WTC11 (cell line): ENCODE measurements at regions of chr15 and their contacts with region 1.

Region 1: DNA sequence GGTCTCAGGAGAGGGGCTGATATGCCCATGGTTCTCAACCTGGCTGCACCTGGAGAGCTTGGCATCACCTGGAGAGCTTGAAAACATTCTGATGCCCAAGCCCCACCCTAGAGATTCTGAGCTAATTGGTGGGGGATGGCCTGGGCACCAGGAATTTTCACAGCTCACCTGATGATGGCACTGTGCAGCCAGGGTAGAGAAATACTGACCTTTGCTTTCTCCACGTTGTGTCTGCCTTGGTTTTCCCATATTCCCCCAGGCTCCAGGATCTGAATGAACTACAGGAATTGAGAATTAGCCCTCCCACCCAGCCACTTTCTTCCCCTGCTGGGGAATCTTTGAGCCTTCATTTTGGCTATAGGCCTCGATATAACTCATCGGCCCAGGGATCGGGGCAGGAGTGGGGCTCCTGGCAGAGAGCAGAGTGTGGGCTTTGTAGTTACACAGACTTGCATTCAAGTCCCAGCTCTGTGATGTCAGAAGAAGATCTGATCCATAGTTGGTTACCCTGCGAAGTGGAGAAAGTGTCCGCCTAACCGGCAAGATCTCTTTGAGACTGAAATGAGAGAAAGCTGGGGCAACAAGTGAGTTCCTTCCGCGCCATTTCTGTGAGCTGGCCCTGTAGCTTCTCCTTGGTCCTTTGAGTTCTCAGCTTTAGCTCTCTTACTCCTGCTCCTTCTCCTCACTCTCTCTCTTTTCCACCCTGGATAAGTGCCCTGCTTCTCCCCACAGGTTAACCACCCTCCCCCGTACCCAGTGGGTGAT is 33.1 kb upstream of the UBE2Q2 start:
- DNase-seq: peak; percentile 60
- ATAC-seq: peak; percentile 96
- H3K4me3 Mint-ChIP-seq: no peak overlapping the region
- H3K27ac Mint-ChIP-seq: no peak overlapping the region
- H3K4me1 Mint-ChIP-seq: peaks cover 7% of the 10 kb centered on the region
- H3K27me3 Mint-ChIP-seq: peaks cover 17% of the 10 kb centered on the region
- CTCF ChIP-seq: no peak

Region 2: GRCh38 chr15:75684642-75685041 is 125.5 kb before region 1 on chr15:
- CTCF ChIA-PET with region 1: interaction called, 11 read pairs
- POLR2A ChIA-PET with region 1: no interaction called
- DNase-seq: no peak
- ATAC-seq: no peak
- H3K4me3 Mint-ChIP-seq: no peak overlapping the region
- H3K27ac Mint-ChIP-seq: no peak overlapping the region
- H3K4me1 Mint-ChIP-seq: peaks cover 22% of the 10 kb centered on the region
- H3K27me3 Mint-ChIP-seq: 0 out of 2 replicates have a peak, but pooled peaks cover 2% of the 10 kb centered on the region
- CTCF ChIP-seq: no peak

Region 3: GRCh38 chr15:75785771-75786574 is 24.2 kb before region 1 on chr15:
- CTCF ChIA-PET with region 1: interaction called, 11 read pairs
- POLR2A ChIA-PET with region 1: no interaction called
- DNase-seq: peak; percentile 74
- ATAC-seq: peak; percentile 66
- H3K4me3 Mint-ChIP-seq: peak overlapping the region; percentile 64
- H3K27ac Mint-ChIP-seq: no peak overlapping the region
- H3K4me1 Mint-ChIP-seq: peaks cover 7% of the 10 kb centered on the region
- H3K27me3 Mint-ChIP-seq: peaks cover 34% of the 10 kb centered on the region
- CTCF ChIP-seq: no peak

Region 4: DNA sequence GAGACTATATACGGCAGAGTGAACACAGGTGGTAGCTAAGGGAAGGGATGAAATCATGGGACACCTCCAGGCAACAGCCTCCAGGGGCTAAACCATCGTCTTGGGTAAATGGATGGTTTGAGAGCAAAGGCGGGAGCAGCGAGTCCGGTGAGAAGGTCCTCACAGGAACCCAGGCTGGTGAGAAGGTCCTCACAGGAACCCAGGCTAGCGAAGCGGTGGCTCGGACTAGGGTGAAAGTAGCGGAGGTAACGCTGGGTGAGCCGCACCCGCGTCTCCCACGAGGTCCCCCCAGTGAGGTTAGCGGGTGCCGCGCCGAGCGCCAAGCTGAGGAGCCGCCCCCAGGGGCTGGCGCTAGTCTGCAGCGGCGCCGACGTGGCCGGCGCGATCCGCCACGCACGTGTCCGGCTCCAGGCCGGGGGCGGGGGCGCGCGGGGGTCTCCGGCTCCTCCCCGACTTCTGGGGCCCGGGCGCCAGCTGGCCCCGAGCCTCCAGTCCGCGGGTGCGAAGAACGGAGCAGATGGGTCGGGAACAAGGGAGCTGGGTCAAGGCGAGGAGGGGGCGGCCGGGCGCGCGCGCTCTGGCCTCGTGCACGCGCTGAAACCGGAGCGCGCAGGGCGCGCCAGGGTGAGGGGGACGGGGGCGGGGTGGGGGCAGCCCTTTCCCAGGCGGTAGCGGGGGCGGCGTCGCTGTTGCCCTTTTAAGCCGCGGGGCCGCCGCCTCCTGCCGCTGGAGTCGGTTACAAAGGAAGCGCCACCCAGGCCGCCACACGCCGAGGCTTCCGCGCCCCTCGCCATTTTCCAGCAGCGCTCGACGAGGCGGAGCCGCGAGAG is 32.8 kb after region 1 on chr15 and contains the start of gene UBE2Q2:
- CTCF ChIA-PET with region 1: interaction called, 30 read pairs
- POLR2A ChIA-PET with region 1: no interaction called
- DNase-seq: peak; percentile 84
- ATAC-seq: peak; percentile 63
- H3K4me3 Mint-ChIP-seq: peak within 1 kb of the TSS; percentile 97
- H3K27ac Mint-ChIP-seq: peak within 1 kb of the TSS; percentile 94
- H3K4me1 Mint-ChIP-seq: peaks cover 41% of the 10 kb centered on the region
- H3K27me3 Mint-ChIP-seq: peaks cover 20% of the 10 kb centered on the region
- CTCF ChIP-seq: no peak
- total RNA-seq, gene UBE2Q2: 26.1 to 28.2 TPM (median 27.0 TPM) in 3 replicates

Region 5: GRCh38 chr15:75921729-75922703 is 111.8 kb after region 1 on chr15:
- CTCF ChIA-PET with region 1: interaction called, 52 read pairs
- POLR2A ChIA-PET with region 1: no interaction called
- DNase-seq: peak; percentile 28
- ATAC-seq: peak; percentile 88
- H3K4me3 Mint-ChIP-seq: no peak overlapping the region
- H3K27ac Mint-ChIP-seq: peak overlapping the region; percentile 8; the same call in 1 of the 2 replicates
- H3K4me1 Mint-ChIP-seq: peaks cover 27% of the 10 kb centered on the region
- H3K27me3 Mint-ChIP-seq: no peaks in the 10 kb centered on the region
- CTCF ChIP-seq: peak; percentile 23; the same call in 1 of the 2 replicates

Region 6: GRCh38 chr15:76150971-76151598 is 340.9 kb after region 1 on chr15:
- CTCF ChIA-PET with region 1: interaction called, 12 read pairs
- POLR2A ChIA-PET with region 1: no interaction called
- DNase-seq: peak; percentile 90
- ATAC-seq: peak; percentile 83
- H3K4me3 Mint-ChIP-seq: peak overlapping the region; percentile 24
- H3K27ac Mint-ChIP-seq: peak overlapping the region; percentile 79
- H3K4me1 Mint-ChIP-seq: peaks cover 47% of the 10 kb centered on the region
- H3K27me3 Mint-ChIP-seq: no peaks in the 10 kb centered on the region
- CTCF ChIP-seq: peak; percentile 92